Activated T-helper 2 cell treated with anti-CD3 and anti-CD28 coated beads, Interferon-gamma antibody, Interleukin-2, Interleukin-4, amounts not matched to agents 10 μg/mL and 5 μg/mL and 100 μg/mL, durations not matched to agents 14 hours and 24 hours and 36 hours (primary cell): ENCODE measurements at regions of chr3 and their contacts with region 1.

Region 1: GRCh38 chr3:98039322-98040024 is 4.4 kb upstream of the GABRR3 start:
- DNase-seq: peak; percentile 77
- H3K4me3 Mint-ChIP-seq: peak overlapping the region; percentile 85
- H3K27ac Mint-ChIP-seq: peak overlapping the region; percentile 93
- H3K4me1 Mint-ChIP-seq: peaks cover 15% of the 10 kb centered on the region
- H3K27me3 Mint-ChIP-seq: peaks cover 27% of the 10 kb centered on the region

Region 2: DNA sequence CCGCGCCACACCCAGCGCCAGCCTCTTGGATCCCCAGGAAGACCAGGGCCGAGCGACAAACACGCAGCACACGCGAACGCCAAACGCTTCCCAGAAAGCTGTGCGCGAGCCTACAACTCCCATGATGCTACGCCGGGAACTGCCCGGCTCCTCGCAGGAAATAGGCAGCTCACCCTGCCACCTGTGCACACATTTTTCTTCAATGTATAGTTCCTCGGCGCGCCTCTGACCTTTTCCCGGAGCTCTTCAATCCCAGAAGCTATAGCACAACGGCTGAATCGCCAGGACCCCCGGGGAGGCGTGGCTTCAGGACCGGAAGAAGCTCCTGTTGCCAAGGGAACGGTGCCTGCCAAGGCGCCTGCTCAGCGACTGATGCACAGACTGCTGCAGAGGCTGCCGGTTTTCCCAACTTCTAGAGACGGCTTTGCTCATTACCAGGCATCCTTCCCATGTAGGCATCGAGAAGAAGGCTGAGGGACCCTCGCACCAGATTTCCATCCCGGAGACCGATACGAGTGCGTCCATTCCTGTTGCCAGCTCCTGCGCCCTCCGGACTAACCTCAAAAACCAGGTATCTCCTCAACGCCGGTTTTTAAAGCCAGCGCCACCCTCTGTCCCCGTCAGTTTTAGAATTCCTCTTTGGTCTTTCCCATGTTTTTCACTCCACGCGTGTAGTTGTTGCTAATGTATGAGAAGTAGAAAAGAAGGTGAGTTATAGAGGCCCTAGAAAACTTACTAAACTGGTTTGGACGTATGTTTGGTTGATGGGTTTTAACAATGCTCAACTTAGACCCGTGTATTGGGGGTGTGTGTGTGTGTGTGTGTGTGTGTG is 274.9 kb before region 1 on chr3 and contains the start of gene ARL6:
- intact Hi-C with region 1: loop called (anchors 1 kb)
- DNase-seq: peak; percentile 69
- H3K4me3 Mint-ChIP-seq: peak within 1 kb of the TSS; percentile 89
- H3K27ac Mint-ChIP-seq: peak within 1 kb of the TSS; percentile 82
- H3K4me1 Mint-ChIP-seq: peaks cover 19% of the 10 kb centered on the region
- H3K27me3 Mint-ChIP-seq: peaks cover 3% of the 10 kb centered on the region
- total RNA-seq, gene ARL6: 3.2 and 3.9 TPM in 2 replicates

Region 3: DNA sequence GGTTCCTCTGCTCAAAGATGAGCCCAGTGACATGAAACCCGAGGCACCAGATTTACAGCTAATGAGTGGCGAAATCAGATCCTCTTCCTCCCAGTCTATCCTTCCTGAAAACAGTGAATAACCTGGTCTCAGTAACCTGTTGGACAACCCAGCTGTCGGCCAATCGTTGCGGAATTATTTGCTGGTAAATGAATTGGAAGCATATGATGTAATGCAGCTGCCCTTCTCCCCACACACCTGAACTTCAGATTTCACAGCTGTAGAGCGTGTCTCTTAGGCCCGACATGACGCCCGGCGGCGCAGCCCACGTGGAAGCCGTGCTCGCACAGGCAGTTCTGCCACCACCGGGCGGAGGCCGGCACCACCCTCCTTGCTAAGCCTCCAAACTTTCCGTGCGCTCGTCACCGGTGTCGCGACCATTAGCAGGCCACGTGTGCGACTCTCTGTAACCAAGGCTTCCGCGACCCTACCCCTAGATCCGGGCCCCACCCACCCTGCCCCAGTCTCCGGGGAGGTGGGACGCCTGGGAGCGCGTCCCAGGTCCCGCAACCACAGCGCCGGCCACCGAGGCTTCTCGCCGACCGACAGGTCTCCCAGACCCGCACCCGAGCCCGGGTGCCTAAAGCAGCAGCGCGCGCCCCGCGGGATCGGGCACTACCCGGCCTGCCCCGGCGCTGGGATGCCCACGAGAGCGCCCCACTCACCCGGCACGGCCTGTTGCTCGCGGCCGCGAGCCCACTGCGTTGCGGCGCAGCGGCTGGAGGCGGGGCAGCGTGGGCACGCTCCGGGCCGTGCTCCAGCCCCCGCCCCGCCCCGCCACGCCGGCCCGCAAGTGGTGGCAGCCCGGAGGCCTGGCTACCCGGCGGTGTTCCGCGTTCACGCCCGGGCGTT is 67.6 kb before region 1 on chr3 and contains the start of gene RIOX2:
- intact Hi-C with region 1: loop called (anchors 5 kb)
- DNase-seq: peak; percentile 75
- H3K4me3 Mint-ChIP-seq: peak within 1 kb of the TSS; percentile 86
- H3K27ac Mint-ChIP-seq: peak within 1 kb of the TSS; percentile 89
- H3K4me1 Mint-ChIP-seq: peaks cover 68% of the 10 kb centered on the region
- H3K27me3 Mint-ChIP-seq: no peaks in the 10 kb centered on the region
- total RNA-seq, gene RIOX2: 59.9 and 63.2 TPM in 2 replicates

Region 4: DNA sequence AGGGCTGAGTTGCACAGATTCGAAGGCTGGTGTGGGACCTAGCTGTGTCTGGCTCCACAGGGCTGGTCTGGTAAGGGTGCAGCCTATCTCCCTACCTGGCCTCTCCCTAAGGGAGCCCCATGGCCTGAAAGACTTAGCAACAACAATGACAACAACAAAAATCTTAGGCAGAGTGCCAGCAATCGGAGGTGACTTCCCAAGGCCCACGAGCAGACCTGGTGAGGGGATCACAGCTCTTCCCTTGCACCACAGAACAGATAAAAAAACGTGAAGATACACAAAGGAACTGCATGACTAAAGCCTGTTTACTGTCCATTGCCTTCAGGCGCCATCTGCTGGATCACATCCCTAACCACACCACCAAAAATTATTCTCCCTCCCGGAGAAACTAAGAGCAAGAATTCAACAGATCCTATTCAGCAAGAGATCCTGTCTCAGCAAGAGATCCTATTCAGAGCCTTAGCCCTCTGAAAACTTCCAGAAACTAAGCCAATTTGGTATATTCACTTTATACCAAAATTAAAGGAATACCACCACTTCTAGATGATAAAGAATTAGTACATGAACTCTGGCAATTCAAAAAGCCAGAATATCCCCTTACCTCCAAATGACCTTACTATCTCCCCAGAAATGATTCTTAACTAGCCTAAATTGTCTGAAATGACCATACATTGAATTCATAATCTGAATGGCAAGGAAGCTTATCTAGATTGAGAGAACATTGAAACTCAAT is 290.1 kb after region 1 on chr3:
- intact Hi-C with region 1: loop called (anchors 1 kb)
- DNase-seq: peak; percentile 26
- H3K4me3 Mint-ChIP-seq: no peak overlapping the region
- H3K27ac Mint-ChIP-seq: no peak overlapping the region
- H3K4me1 Mint-ChIP-seq: peaks cover 27% of the 10 kb centered on the region
- H3K27me3 Mint-ChIP-seq: peaks cover 34% of the 10 kb centered on the region

Region 5: GRCh38 chr3:98573181-98573728 is 533.8 kb after region 1 on chr3:
- intact Hi-C with region 1: loop called (anchors 2 kb)
- DNase-seq: no peak
- H3K4me3 Mint-ChIP-seq: peak overlapping the region; percentile 47
- H3K27ac Mint-ChIP-seq: peak overlapping the region; percentile 71
- H3K4me1 Mint-ChIP-seq: peaks cover 57% of the 10 kb centered on the region
- H3K27me3 Mint-ChIP-seq: no peaks in the 10 kb centered on the region

Region 6: GRCh38 chr3:98817547-98818041 is 778.1 kb after region 1 on chr3:
- intact Hi-C with region 1: loop called (anchors 2 kb)
- DNase-seq: no peak
- H3K4me3 Mint-ChIP-seq: no peak overlapping the region
- H3K27ac Mint-ChIP-seq: no peak overlapping the region
- H3K4me1 Mint-ChIP-seq: no peaks in the 10 kb centered on the region
- H3K27me3 Mint-ChIP-seq: no peaks in the 10 kb centered on the region